Ovary (tissue), 10 donors: ENCODE measurements at regions of chr14 and their contacts with region 1.

Region 1: GRCh38 chr14:92644171-92644969 is 104.1 kb downstream of the LGMN start:
- DNase-seq: no peak
- H3K4me3 ChIP-seq: no peak overlapping the region
- H3K27ac ChIP-seq: no peak overlapping the region
- H3K4me1 ChIP-seq: no peaks in the 10 kb centered on the region
- H3K27me3 ChIP-seq: no peaks in the 10 kb centered on the region
- CTCF ChIP-seq: no peak
- EP300 ChIP-seq: no peak
- POLR2A ChIP-seq: no peak

Region 2: GRCh38 chr14:92686900-92687444 is 42.6 kb after region 1 on chr14:
- intact Hi-C with region 1: loop called in 1 of 4 experiments (anchors 2 kb)
- DNase-seq: peak; percentile 68 to 90 (median 79)
- H3K4me3 ChIP-seq: peak overlapping the region; percentile 6
- H3K27ac ChIP-seq: no peak overlapping the region
- H3K4me1 ChIP-seq: peaks cover 5% of the 10 kb centered on the region
- H3K27me3 ChIP-seq: no peaks in the 10 kb centered on the region
- CTCF ChIP-seq: peak; percentile 89 to 100 (median 98)
- EP300 ChIP-seq: no peak
- POLR2A ChIP-seq: no peak